Activated naive CD4-positive, alpha-beta T cell treated with anti-CD3 and anti-CD28 coated beads for 36 hours (primary cell): ENCODE measurements at regions of chr2 and their contacts with region 1.

Region 1: GRCh38 chr2:20381444-20381843 is 30.8 kb upstream of the PUM2 start:
- DNase-seq: no peak
- H3K4me3 Mint-ChIP-seq: no peak overlapping the region
- H3K27ac Mint-ChIP-seq: no peak overlapping the region
- H3K4me1 Mint-ChIP-seq: no peaks in the 10 kb centered on the region
- H3K27me3 Mint-ChIP-seq: peaks cover 4% of the 10 kb centered on the region

Region 2: GRCh38 chr2:20242060-20243006 is 139.1 kb before region 1 on chr2:
- CTCF ChIA-PET with region 1: no interaction called
- intact Hi-C with region 1: loop called (anchors 1 kb)
- DNase-seq: peak; percentile 50
- H3K4me3 Mint-ChIP-seq: peak overlapping the region; percentile 50
- H3K27ac Mint-ChIP-seq: no peak overlapping the region
- H3K4me1 Mint-ChIP-seq: peaks cover 7% of the 10 kb centered on the region
- H3K27me3 Mint-ChIP-seq: no peaks in the 10 kb centered on the region